Naive thymus-derived CD4-positive, alpha-beta T cell (primary cell): ENCODE measurements at regions of chr6 and their contacts with region 1.

Region 1: GRCh38 chr6:29942275-29943052 is at the start of gene HLA-A:
- DNase-seq: peak; percentile 76 to 97 (median 92)
- ATAC-seq: peak; percentile 91
- H3K4me3 ChIP-seq: peak within 1 kb of the TSS; percentile 98
- H3K4me3 Mint-ChIP-seq: peak within 1 kb of the TSS; percentile 87 to 99 (median 97)
- H3K27ac ChIP-seq: peak within 1 kb of the TSS; percentile 99
- H3K27ac Mint-ChIP-seq: peak within 1 kb of the TSS; percentile 99 to 100 (median 100)
- H3K4me1 ChIP-seq: peaks cover 24 to 35% of the 10 kb centered on the region in 2 donors
- H3K4me1 Mint-ChIP-seq: peaks cover 32 to 52% (median 47%) of the 10 kb centered on the region in 7 donors
- H3K27me3 ChIP-seq: no peaks in the 10 kb centered on the region
- H3K27me3 Mint-ChIP-seq: peaks cover 0 to 6% (median 0%) of the 10 kb centered on the region in 5 donors
- total RNA-seq, gene HLA-A: 1,540 to 2,258 (median 1,836) TPM

Region 2: DNA sequence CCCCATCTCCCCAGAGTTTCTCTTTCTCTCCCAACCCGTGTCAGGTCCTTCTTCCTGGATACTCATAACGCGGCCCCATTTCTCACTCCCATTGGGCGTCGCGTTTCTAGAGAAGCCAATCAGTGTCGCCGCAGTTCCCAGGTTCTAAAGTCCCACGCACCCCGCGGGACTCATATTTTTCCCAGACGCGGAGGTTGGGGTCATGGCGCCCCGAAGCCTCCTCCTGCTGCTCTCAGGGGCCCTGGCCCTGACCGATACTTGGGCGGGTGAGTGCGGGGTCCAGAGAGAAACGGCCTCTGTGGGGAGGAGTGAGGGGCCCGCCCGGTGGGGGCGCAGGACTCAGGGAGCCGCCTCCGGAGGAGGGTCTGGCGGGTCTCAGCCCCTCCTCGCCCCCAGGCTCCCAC is 219.2 kb before region 1 on chr6 and contains the start of gene HLA-F:
- CTCF ChIA-PET with region 1: no interaction called
- POLR2A ChIA-PET with region 1: no interaction called
- intact Hi-C with region 1: loop called in 1 of 2 experiments (anchors 5 kb)
- DNase-seq: peak; percentile 56 to 87 (median 79)
- ATAC-seq: peak; percentile 91
- H3K4me3 ChIP-seq: peak within 1 kb of the TSS; percentile 98
- H3K4me3 Mint-ChIP-seq: peak within 1 kb of the TSS; percentile 82 to 97 (median 95)
- H3K27ac ChIP-seq: peak within 1 kb of the TSS; percentile 100
- H3K27ac Mint-ChIP-seq: peak within 1 kb of the TSS; percentile 92 to 98 (median 95)
- H3K4me1 ChIP-seq: peaks cover 47 to 48% of the 10 kb centered on the region in 2 donors
- H3K4me1 Mint-ChIP-seq: peaks cover 32 to 63% (median 50%) of the 10 kb centered on the region in 7 donors
- H3K27me3 ChIP-seq: no peaks in the 10 kb centered on the region
- H3K27me3 Mint-ChIP-seq: no peaks in the 10 kb centered on the region
- total RNA-seq, gene HLA-F: 502 to 678 (median 522) TPM

Region 3: DNA sequence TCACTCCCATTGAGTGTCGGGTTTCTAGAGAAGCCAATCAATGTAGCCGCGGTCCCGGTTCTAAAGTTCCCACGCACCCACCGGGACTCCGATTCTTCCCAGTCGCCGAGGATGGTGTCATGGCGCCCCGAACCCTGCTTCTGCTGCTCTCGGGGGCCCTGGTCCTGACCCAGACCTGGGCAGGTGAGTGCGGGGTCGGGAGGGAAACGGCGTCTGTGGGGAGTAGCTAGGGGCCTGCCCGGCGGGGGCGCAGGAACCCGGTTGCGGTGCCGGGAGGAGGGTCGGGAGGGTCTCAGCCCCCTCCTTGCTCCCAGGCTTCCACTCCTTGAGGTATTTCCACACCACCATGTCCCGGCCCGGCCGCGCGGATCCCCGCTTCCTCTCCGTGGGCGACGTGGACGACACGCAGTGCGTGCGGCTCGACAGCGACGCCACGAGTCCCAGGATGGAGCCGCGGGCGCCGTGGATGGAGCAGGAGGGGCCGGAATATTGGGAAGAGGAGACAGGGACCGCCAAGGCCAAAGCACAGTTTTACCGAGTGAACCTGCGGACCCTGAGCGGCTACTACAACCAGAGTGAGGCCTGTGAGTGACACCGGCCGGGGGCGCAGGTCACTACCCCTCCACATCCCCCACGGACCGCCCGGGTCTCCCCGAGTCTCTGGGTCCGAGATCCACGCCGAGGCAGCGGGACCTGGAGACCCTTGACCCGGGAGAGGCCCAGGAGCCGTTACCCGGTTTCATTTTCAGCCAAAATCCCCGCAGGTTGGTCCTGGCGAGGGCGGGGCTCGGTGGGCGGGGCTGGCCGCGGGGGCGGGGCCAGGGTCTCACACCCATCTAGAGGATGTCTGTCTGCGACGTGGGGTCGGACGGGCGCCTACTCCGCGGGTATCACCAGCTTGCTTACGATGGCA is 150.1 kb before region 1 on chr6:
- CTCF ChIA-PET with region 1: no interaction called
- POLR2A ChIA-PET with region 1: interaction called, 12 read pairs
- intact Hi-C with region 1: loop called in 1 of 2 experiments (anchors 2 kb)
- DNase-seq: peak; percentile 37 to 83 (median 67)
- ATAC-seq: peak; percentile 95
- H3K4me3 ChIP-seq: peak overlapping the region; percentile 80
- H3K4me3 Mint-ChIP-seq: peak overlapping the region; percentile 88 to 92 (median 89)
- H3K27ac ChIP-seq: peak overlapping the region; percentile 84
- H3K27ac Mint-ChIP-seq: peak overlapping the region; percentile 42 to 89 (median 79)
- H3K4me1 ChIP-seq: peaks cover 4 to 7% of the 10 kb centered on the region in 2 donors
- H3K4me1 Mint-ChIP-seq: peaks cover 15 to 38% (median 19%) of the 10 kb centered on the region in 7 donors
- H3K27me3 ChIP-seq: no peaks in the 10 kb centered on the region
- H3K27me3 Mint-ChIP-seq: peaks cover 7 to 72% (median 35%) of the 10 kb centered on the region in 5 donors

Region 4: GRCh38 chr6:29887819-29888776 is 54.4 kb before region 1 on chr6:
- CTCF ChIA-PET with region 1: no interaction called
- POLR2A ChIA-PET with region 1: interaction called, 24 read pairs
- intact Hi-C with region 1: loop called (anchors 1 kb)
- DNase-seq: peak in 8 of 9 donors; percentile 36 to 89 (median 72)
- ATAC-seq: peak; percentile 91
- H3K4me3 ChIP-seq: peak overlapping the region; percentile 73
- H3K4me3 Mint-ChIP-seq: peak overlapping the region in 9 of 10 donors; percentile 79 to 95 (median 94)
- H3K27ac ChIP-seq: peak overlapping the region; percentile 94
- H3K27ac Mint-ChIP-seq: peak overlapping the region in 8 of 9 donors; percentile 72 to 98 (median 94)
- H3K4me1 ChIP-seq: peaks cover 3 to 7% of the 10 kb centered on the region in 2 donors
- H3K4me1 Mint-ChIP-seq: peaks cover 0 to 27% (median 20%) of the 10 kb centered on the region in 7 donors
- H3K27me3 ChIP-seq: no peaks in the 10 kb centered on the region
- H3K27me3 Mint-ChIP-seq: peaks cover 0 to 18% (median 0%) of the 10 kb centered on the region in 5 donors

Region 5: DNA sequence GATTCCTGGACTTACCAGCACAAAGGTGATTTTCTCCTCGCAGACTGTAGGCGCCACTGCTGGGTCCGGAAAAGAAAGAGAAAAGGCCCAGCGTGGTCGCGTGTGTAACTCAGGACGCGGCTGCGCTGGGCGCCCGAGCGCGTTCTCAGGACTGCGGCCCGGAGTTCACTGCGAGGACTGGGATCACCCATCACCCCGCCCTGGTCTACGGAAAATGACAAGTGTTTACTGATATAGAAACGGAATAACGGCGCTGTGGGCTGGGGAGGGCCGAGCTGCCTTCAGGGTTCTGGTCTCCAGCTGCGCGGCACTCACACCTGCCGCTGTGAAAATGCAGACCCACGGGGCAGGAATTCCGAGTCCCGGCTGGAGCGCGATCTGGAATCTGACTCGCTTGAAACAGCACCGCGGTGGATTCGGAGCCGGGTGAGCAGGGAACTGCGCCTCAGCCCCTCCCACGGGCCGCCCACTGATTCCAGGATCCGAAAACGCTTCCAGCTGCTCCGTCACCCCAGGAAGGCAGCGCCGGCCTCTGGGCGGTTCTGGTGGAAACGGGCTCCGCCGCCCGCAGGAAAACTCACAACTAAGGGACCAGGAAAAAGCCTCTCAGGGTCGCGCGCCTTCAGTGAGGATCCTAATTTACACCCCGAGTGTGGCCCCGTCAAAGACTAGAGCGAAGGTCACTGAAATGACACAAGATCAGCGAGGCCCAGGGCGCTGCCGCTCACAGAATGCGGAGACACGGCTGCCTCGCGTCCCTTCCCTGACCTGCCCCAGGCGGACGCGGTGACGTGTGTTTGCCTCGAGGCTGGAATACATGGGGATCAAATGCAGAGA is 34.3 kb after region 1 on chr6:
- CTCF ChIA-PET with region 1: no interaction called
- POLR2A ChIA-PET with region 1: interaction called, 13 read pairs
- intact Hi-C with region 1: loop called (anchors 5 kb)
- DNase-seq: peak in 8 of 9 donors; percentile 27 to 60 (median 42)
- ATAC-seq: peak; percentile 87
- H3K4me3 ChIP-seq: peak overlapping the region; percentile 60
- H3K4me3 Mint-ChIP-seq: peak overlapping the region; percentile 87 to 96 (median 92)
- H3K27ac ChIP-seq: no peak overlapping the region
- H3K27ac Mint-ChIP-seq: peak overlapping the region in 4 of 9 donors; percentile 0 to 51 (median 26)
- H3K4me1 ChIP-seq: peaks cover 15 to 21% of the 10 kb centered on the region in 2 donors
- H3K4me1 Mint-ChIP-seq: peaks cover 38 to 46% (median 42%) of the 10 kb centered on the region in 7 donors
- H3K27me3 ChIP-seq: peaks cover 6 to 12% of the 10 kb centered on the region in 2 donors
- H3K27me3 Mint-ChIP-seq: peaks cover 36 to 74% (median 53%) of the 10 kb centered on the region in 5 donors

Region 6: GRCh38 chr6:30066577-30067459 is 124.4 kb after region 1 on chr6 and contains the start of gene PPP1R11:
- CTCF ChIA-PET with region 1: no interaction called
- POLR2A ChIA-PET with region 1: interaction called, 14 read pairs
- intact Hi-C with region 1: loop called (anchors 1 to 2 kb)
- DNase-seq: peak; percentile 84 to 100 (median 99)
- ATAC-seq: peak; percentile 99
- H3K4me3 ChIP-seq: peak within 1 kb of the TSS; percentile 94
- H3K4me3 Mint-ChIP-seq: peak within 1 kb of the TSS; percentile 87 to 100 (median 98)
- H3K27ac ChIP-seq: peak within 1 kb of the TSS; percentile 96
- H3K27ac Mint-ChIP-seq: peak within 1 kb of the TSS; percentile 96 to 100 (median 99)
- H3K4me1 ChIP-seq: peaks cover 28 to 41% of the 10 kb centered on the region in 2 donors
- H3K4me1 Mint-ChIP-seq: peaks cover 43 to 77% (median 71%) of the 10 kb centered on the region in 7 donors
- H3K27me3 ChIP-seq: no peaks in the 10 kb centered on the region
- H3K27me3 Mint-ChIP-seq: peaks cover 10 to 22% (median 16%) of the 10 kb centered on the region in 5 donors
- total RNA-seq, gene PPP1R11: 49.4 to 67.1 (median 62.7) TPM

Region 7: DNA sequence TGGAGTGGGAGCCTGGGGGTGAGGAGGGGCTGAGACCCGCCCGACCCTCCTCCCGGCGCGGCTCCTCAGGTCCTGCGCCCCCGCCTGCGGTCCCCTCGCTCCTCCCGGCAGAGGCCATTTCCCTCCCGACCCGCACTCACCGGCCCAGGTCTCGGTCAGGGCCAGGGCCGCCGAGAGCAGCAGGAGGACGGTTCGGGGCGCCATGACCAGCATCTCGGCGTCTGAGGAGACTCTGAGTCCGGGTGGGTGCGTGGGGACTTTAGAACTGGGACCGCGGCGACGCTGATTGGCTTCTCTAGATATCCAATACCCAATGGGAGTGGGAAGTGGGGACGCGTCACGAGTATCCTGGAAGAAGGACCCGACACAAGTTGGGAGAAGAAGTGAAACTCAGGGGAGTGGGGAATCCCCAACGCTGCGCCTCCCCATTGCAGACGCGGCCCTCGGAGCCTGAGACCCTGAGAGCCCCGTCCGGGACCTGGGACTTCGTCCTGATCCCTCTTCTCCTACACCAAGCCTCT is 1414.5 kb after region 1 on chr6 and contains the start of gene HLA-B:
- CTCF ChIA-PET with region 1: no interaction called
- POLR2A ChIA-PET with region 1: no interaction called
- intact Hi-C with region 1: loop called in 1 of 2 experiments (anchors 5 kb)
- DNase-seq: peak; percentile 65 to 91 (median 82)
- ATAC-seq: peak; percentile 90
- H3K4me3 ChIP-seq: peak within 1 kb of the TSS; percentile 68
- H3K4me3 Mint-ChIP-seq: peak within 1 kb of the TSS; percentile 80 to 100 (median 98)
- H3K27ac ChIP-seq: peak within 1 kb of the TSS; percentile 100
- H3K27ac Mint-ChIP-seq: peak within 1 kb of the TSS; percentile 99 to 100 (median 100)
- H3K4me1 ChIP-seq: peaks cover 28 to 33% of the 10 kb centered on the region in 2 donors
- H3K4me1 Mint-ChIP-seq: peaks cover 49 to 66% (median 58%) of the 10 kb centered on the region in 7 donors
- H3K27me3 ChIP-seq: no peaks in the 10 kb centered on the region
- H3K27me3 Mint-ChIP-seq: peaks cover 0 to 19% (median 0%) of the 10 kb centered on the region in 5 donors
- total RNA-seq, gene HLA-B: 5,136 to 7,364 (median 5,516) TPM